PC-3 (cell line): ENCODE measurements at regions of chr13 and their contacts with region 1.

Region 1: DNA sequence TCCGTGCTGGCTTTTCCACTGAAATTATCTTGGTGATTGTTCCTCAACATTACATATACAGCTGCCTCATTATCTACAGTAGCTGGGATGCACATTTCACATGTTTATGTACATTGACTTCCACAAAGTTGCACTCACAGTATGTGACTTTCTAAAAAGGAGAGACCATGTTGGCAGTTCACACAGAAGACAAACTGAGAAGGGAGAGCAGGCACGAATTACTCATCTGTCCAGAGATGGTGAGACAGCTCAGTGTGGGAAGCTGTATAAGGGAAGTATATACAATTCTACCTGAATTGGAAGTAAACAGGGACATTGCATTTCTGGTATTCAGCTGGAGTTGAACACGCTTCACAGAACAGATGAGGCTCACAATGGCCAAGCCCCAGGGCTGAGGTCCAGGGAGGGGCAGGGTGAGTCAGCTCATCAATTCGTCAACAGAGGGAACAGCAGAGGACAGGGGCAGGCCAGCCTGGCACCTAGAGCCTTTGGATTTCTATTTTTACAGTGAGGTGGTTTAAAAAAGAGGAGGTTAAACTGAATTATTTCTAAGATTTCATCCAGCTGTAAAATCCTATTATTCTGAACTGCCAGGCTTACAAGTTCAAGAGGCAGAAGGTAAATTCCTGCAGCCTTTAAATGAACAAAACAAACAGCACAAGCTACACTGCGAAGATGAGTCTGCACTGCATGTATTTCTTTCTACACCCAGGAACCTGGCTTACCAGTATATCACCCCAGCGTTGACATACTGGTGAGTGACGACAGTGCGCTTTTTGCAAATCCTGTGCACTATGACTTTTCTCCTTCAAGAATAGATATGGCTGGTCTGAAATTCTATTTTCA is 9.8 kb downstream of the PARP4 start:
- DNase-seq: peak; percentile 92
- ATAC-seq: peak; percentile 98
- H3K4me3 ChIP-seq: peak overlapping the region; percentile 22
- H3K27ac ChIP-seq: peak overlapping the region; percentile 97
- H3K4me1 ChIP-seq: peaks cover 40% of the 10 kb centered on the region
- H3K27me3 ChIP-seq: no peaks in the 10 kb centered on the region
- CTCF ChIP-seq: no peak

Region 2: GRCh38 chr13:24463078-24463477 is 39.7 kb before region 1 on chr13:
- CTCF ChIA-PET with region 1: no interaction called
- POLR2A ChIA-PET with region 1: no interaction called
- intact Hi-C with region 1: no loop called
- DNase-seq: no peak
- ATAC-seq: no peak
- H3K4me3 ChIP-seq: no peak overlapping the region
- H3K27ac ChIP-seq: no peak overlapping the region
- H3K4me1 ChIP-seq: no peaks in the 10 kb centered on the region
- H3K27me3 ChIP-seq: no peaks in the 10 kb centered on the region
- CTCF ChIP-seq: no peak

Region 3: DNA sequence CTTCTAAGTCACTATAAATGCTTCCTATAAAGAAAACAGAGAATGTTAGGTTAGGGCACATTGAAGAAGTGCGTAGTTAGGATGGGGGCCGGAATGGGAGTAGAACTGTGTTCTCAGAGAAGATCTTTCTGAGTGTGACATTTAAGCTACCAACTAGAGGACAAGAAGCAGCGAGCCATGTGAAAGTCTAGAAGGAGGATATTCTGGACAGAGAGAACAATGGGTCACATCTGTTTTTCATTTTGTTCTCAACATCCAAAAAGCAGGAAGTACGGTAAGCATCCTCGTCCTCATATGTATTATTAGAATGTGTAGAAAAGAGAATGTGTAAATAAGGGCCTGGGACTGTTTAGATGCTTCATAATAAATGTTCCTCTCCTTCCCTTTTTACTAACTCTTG is 54.3 kb after region 1 on chr13:
- CTCF ChIA-PET with region 1: no interaction called
- POLR2A ChIA-PET with region 1: no interaction called
- intact Hi-C with region 1: loop called (anchors 10 kb)
- DNase-seq: no peak
- ATAC-seq: no peak
- H3K4me3 ChIP-seq: no peak overlapping the region
- H3K27ac ChIP-seq: no peak overlapping the region
- H3K4me1 ChIP-seq: no peaks in the 10 kb centered on the region
- H3K27me3 ChIP-seq: peaks cover 25% of the 10 kb centered on the region
- CTCF ChIP-seq: no peak